Posterior vena cava (tissue), 2 donors: ENCODE measurements at regions of chr1 and their contacts with region 1.

Region 1: GRCh38 chr1:156226116-156226538 is 13.3 kb downstream of the PMF1 start:
- DNase-seq: no peak

Region 2: GRCh38 chr1:154925335-154926170 is 1300.6 kb before region 1 on chr1:
- intact Hi-C with region 1: no loop called
- DNase-seq: no peak

Region 3: DNA sequence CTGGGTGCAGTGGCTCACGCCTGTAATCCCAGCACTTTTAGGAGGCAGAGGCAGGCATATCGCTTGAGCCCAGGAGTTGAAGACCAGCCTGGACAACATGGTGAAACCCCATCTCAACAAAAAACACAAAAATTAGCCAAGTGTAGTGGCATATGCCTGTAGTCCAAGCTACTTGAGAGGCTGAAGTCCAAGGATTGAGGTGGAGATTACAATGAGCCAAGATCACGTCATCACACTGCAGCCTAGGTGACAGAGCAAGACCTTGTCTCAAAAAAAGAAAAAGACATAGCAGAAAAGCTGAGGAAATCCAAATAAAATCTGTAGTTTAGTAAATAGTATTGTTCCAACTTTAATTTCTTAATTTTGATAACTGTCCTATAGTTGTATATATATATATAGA is 652.0 kb before region 1 on chr1:
- intact Hi-C with region 1: no loop called
- DNase-seq: no peak

Region 4: DNA sequence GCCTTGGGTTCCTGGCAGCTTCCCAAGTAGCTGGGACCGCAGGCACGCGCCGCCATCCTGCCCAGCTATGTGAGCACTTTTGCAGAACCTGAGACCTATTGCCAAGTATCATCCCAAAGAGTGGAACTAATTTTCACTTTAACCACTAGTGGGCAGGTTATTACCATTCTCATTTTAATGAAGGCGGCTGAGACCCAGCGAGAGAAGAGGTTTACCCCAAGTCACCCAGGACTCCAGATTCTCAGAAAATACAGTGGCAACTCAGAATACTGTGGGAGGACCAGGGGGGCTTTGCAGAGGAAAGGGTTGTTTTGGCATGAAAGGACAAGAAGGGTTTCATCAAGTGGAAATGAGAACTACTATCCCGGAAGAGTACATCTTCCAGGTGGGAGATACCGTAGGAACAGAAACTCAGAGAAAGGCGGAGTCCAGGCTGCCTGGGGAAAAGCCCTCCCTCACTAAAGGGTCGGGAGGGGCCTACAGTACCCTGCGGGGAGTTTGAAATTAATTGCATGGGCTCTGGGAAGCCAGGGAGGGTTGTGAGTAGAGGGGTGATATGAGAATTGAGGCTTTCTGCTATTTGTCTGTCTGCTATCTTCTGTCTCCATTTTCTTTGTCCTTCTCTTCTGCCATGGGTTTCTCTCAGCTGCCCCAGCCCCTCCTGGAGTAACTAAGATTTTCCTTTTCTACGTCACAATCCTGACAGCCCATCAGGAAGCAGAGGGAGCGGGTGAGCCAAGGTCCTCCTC is 79.9 kb before region 1 on chr1:
- intact Hi-C with region 1: loop called (anchors 5 kb)
- DNase-seq: peak; percentile 92

Region 5: GRCh38 chr1:156154317-156154749 is 71.8 kb before region 1 on chr1:
- intact Hi-C with region 1: loop called (anchors 5 kb)
- DNase-seq: peak; percentile 87

Region 6: DNA sequence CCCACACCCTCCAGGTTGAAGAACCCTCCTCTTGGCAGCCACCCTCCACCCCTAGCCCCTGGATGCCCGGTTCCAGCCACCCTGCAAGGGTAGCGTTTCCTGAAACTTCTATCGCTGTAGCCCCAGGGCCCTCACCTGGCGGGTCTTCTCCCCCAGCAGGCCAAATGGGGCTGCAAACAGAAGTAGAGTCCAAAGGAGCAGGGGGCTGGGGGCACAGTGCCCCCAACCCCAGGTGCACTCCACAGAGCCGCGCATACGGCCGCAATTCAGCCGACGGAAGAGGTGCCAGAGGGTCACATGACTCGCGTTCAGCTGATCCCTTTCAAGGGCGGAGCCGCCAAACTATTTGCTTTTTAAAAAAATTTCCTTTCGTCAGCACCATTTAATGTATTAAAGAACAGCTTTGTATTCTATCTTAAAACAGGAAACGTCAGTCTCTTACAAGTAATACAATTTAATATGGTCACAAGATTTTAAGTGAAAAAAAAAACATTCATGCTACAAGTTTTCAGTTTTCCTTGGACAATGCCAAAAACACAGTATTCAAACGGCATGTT is 69.3 kb after region 1 on chr1 and contains the start of gene GLMP:
- intact Hi-C with region 1: no loop called
- DNase-seq: peak; percentile 88
- total RNA-seq, gene GLMP: 34.2 to 51.5 TPM